Aorta (tissue), 5 donors: ENCODE measurements at regions of chr16 and their contacts with region 1.

Region 1: GRCh38 chr16:65671-66137 is 6.7 kb downstream of the RHBDF1 start:
- DNase-seq: peak; percentile 88 to 95
- ATAC-seq: peak; percentile 81
- H3K4me3 ChIP-seq: no peak overlapping the region
- H3K27ac ChIP-seq: no peak overlapping the region
- H3K4me1 ChIP-seq: no peaks in the 10 kb centered on the region
- H3K27me3 ChIP-seq: no peaks in the 10 kb centered on the region

Region 2: GRCh38 chr16:96935-97381 is 31.3 kb after region 1 on chr16:
- intact Hi-C with region 1: loop called (anchors 1 kb)
- DNase-seq: peak; percentile 95 to 96
- ATAC-seq: peak; percentile 93
- H3K4me3 ChIP-seq: no peak overlapping the region
- H3K27ac ChIP-seq: no peak overlapping the region
- H3K4me1 ChIP-seq: no peaks in the 10 kb centered on the region
- H3K27me3 ChIP-seq: no peaks in the 10 kb centered on the region

Region 3: GRCh38 chr16:278863-279366 is 213.2 kb after region 1 on chr16:
- intact Hi-C with region 1: no loop called
- DNase-seq: no peak
- ATAC-seq: no peak
- H3K4me3 ChIP-seq: no peak overlapping the region
- H3K27ac ChIP-seq: no peak overlapping the region
- H3K4me1 ChIP-seq: no peaks in the 10 kb centered on the region
- H3K27me3 ChIP-seq: no peaks in the 10 kb centered on the region